Endothelial cell of umbilical vein (primary cell): ENCODE measurements at regions of chr9 and their contacts with region 1.

Region 1: GRCh38 chr9:72364679-72365524 is at the start of gene ZFAND5:
- DNase-seq: peak; percentile 96
- H3K4me3 ChIP-seq: peak within 1 kb of the TSS; percentile 54 to 88 (median 56)
- H3K27ac ChIP-seq: peak within 1 kb of the TSS; percentile 97
- H3K4me1 ChIP-seq: peaks cover 19% of the 10 kb centered on the region
- H3K27me3 ChIP-seq: no peaks in the 10 kb centered on the region
- CTCF ChIP-seq: no peak
- POLR2A ChIP-seq: peak; percentile 99
- total RNA-seq, gene ZFAND5: 176 and 194 TPM in 2 replicates

Region 2: GRCh38 chr9:72292256-72292682 is 72.6 kb before region 1 on chr9:
- CTCF ChIA-PET with region 1: interaction called, 7 read pairs
- POLR2A ChIA-PET with region 1: interaction called, 3 read pairs
- dilution Hi-C with region 1: no loop called
- intact Hi-C with region 1: loop called (anchors 2 kb)
- DNase-seq: peak; percentile 58
- H3K4me3 ChIP-seq: no peak overlapping the region
- H3K27ac ChIP-seq: no peak overlapping the region
- H3K4me1 ChIP-seq: no peaks in the 10 kb centered on the region
- H3K27me3 ChIP-seq: peaks cover 2% of the 10 kb centered on the region in 2 experiments
- CTCF ChIP-seq: peak; percentile 11 to 20
- POLR2A ChIP-seq: no peak

Region 3: GRCh38 chr9:72443855-72444254 is 79.0 kb after region 1 on chr9:
- CTCF ChIA-PET with region 1: interaction called, 3 read pairs
- POLR2A ChIA-PET with region 1: interaction called, 10 read pairs
- dilution Hi-C with region 1: no loop called
- intact Hi-C with region 1: loop called (anchors 1 kb)
- DNase-seq: no peak
- H3K4me3 ChIP-seq: no peak overlapping the region
- H3K27ac ChIP-seq: no peak overlapping the region
- H3K4me1 ChIP-seq: peaks cover 26% of the 10 kb centered on the region
- H3K27me3 ChIP-seq: no peaks in the 10 kb centered on the region
- CTCF ChIP-seq: no peak
- POLR2A ChIP-seq: no peak

Region 4: GRCh38 chr9:72478966-72479365 is 114.1 kb after region 1 on chr9:
- CTCF ChIA-PET with region 1: interaction called, 6 read pairs
- POLR2A ChIA-PET with region 1: interaction called, 11 read pairs
- dilution Hi-C with region 1: no loop called
- intact Hi-C with region 1: loop called (anchors 1 kb)
- DNase-seq: peak; percentile 87
- H3K4me3 ChIP-seq: peak overlapping the region in 1 of 3 experiments; percentile 42
- H3K27ac ChIP-seq: peak overlapping the region; percentile 80
- H3K4me1 ChIP-seq: peaks cover 42% of the 10 kb centered on the region
- H3K27me3 ChIP-seq: no peaks in the 10 kb centered on the region
- CTCF ChIP-seq: no peak
- POLR2A ChIP-seq: no peak

Region 5: GRCh38 chr9:72586388-72587130 is 221.7 kb after region 1 on chr9:
- CTCF ChIA-PET with region 1: interaction called, 70 read pairs
- POLR2A ChIA-PET with region 1: interaction called, 31 read pairs
- dilution Hi-C with region 1: no loop called
- intact Hi-C with region 1: loop called (anchors 1 kb)
- DNase-seq: peak; percentile 42
- H3K4me3 ChIP-seq: no peak overlapping the region
- H3K27ac ChIP-seq: no peak overlapping the region
- H3K4me1 ChIP-seq: peaks cover 19% of the 10 kb centered on the region
- H3K27me3 ChIP-seq: no peaks in the 10 kb centered on the region
- CTCF ChIP-seq: peak in 1 of 2 donors; percentile 4
- POLR2A ChIP-seq: no peak

Region 6: GRCh38 chr9:73149371-73150067 is 784.6 kb after region 1 on chr9:
- CTCF ChIA-PET with region 1: no interaction called
- POLR2A ChIA-PET with region 1: no interaction called
- dilution Hi-C with region 1: no loop called
- intact Hi-C with region 1: loop called (anchors 10 kb)
- DNase-seq: peak; percentile 88
- H3K4me3 ChIP-seq: peak overlapping the region in 1 of 3 experiments; percentile 23
- H3K27ac ChIP-seq: peak overlapping the region; percentile 77
- H3K4me1 ChIP-seq: peaks cover 44% of the 10 kb centered on the region
- H3K27me3 ChIP-seq: no peaks in the 10 kb centered on the region
- CTCF ChIP-seq: no peak
- POLR2A ChIP-seq: no peak